ENCODE measurements at regions of chr9 and their contacts with region 1.

Region 1: DNA sequence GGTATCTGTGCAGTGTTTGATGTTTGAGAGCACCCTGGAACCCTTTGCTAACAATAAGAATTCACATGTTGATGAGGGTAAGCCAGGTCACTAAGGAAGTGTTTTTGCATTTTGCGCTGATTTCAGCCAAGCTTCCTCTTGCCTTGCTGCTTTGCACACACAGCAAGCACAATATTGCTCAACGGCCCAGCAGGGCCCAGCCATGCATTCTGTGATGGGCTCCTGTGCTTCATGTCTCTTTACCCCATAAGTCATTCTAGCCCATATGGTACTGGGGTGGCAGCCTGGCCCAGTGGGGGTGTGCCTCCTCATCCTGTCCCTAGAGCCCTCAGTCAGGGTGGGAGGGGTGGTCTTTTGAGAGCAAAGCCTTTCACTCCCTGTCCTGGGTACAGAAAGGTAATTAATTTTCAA is 481.3 kb downstream of the GADD45G start:
- DNase-seq: no peak
- ATAC-seq: peak in 5 of 8 donors; percentile 52 to 63 (median 56)
- H3K4me3 ChIP-seq: no peak overlapping the region
- H3K27ac ChIP-seq: peak overlapping the region in 1 of 10 donors; percentile 22
- H3K4me1 ChIP-seq: peaks cover 0 to 12% (median 0%) of the 10 kb centered on the region in 9 donors
- H3K27me3 ChIP-seq: peaks cover 0 to 6% (median 3%) of the 10 kb centered on the region in 7 donors
- CTCF ChIP-seq: no peak

Region 2: DNA sequence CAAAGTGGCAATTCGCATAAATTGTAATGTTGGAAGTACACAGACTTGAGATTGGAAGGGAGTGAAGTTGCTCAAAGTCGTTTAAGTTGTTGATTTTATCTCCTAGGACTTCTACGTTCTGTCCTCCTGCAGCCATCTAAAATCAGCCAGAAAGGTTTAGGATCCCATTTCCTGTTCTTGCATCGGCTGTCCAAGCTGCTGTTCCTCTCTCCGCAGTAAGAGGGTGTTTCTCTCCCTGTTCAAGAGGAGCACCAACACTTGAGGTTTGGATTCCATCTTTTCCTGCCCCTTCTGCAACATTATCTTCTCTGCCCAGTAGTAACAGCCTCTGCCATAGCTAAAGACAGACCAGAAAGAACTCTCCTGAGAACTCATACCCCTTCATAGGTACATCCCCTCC is 107.9 kb before region 1 on chr9:
- intact Hi-C with region 1: loop called in 1 of 10 experiments (anchors 10 kb)
- DNase-seq: no peak
- ATAC-seq: peak in 2 of 8 donors; percentile 17 to 44
- H3K4me3 ChIP-seq: no peak overlapping the region
- H3K27ac ChIP-seq: no peak overlapping the region
- H3K4me1 ChIP-seq: peaks cover 0 to 11% (median 0%) of the 10 kb centered on the region in 9 donors
- H3K27me3 ChIP-seq: no peaks in the 10 kb centered on the region
- CTCF ChIP-seq: peak in 7 of 9 donors; percentile 27 to 54 (median 42)

Measured in heart right ventricle (tissue), 16 donors.